B cell (primary cell): ENCODE measurements at regions of chr16 and their contacts with region 1.

Region 1: GRCh38 chr16:117379-118365 is 20.8 kb downstream of the NPRL3 start:
- DNase-seq: peak; percentile 78
- ATAC-seq: peak; percentile 80
- H3K4me3 ChIP-seq: no peak overlapping the region
- H3K4me3 Mint-ChIP-seq: no peak overlapping the region
- H3K27ac ChIP-seq: no peak overlapping the region
- H3K27ac Mint-ChIP-seq: no peak overlapping the region
- H3K4me1 ChIP-seq: peaks cover 0 to 6% of the 10 kb centered on the region in 2 donors
- H3K4me1 Mint-ChIP-seq: peaks cover 4% of the 10 kb centered on the region
- H3K27me3 ChIP-seq: no peaks in the 10 kb centered on the region
- H3K27me3 Mint-ChIP-seq: no peaks in the 10 kb centered on the region
- CTCF ChIP-seq: peak; percentile 82

Region 2: GRCh38 chr16:106623-107324 is 10.9 kb before region 1 on chr16:
- CTCF ChIA-PET with region 1: interaction called, 43 read pairs
- POLR2A ChIA-PET with region 1: no interaction called
- intact Hi-C with region 1: no loop called
- DNase-seq: peak; percentile 78
- ATAC-seq: peak; percentile 74
- H3K4me3 ChIP-seq: no peak overlapping the region
- H3K4me3 Mint-ChIP-seq: no peak overlapping the region
- H3K27ac ChIP-seq: no peak overlapping the region
- H3K27ac Mint-ChIP-seq: no peak overlapping the region
- H3K4me1 ChIP-seq: peaks cover 0 to 3% of the 10 kb centered on the region in 2 donors
- H3K4me1 Mint-ChIP-seq: peaks cover 3% of the 10 kb centered on the region
- H3K27me3 ChIP-seq: no peaks in the 10 kb centered on the region
- H3K27me3 Mint-ChIP-seq: no peaks in the 10 kb centered on the region
- CTCF ChIP-seq: peak; percentile 82

Region 3: GRCh38 chr16:129075-129474 is 11.4 kb after region 1 on chr16:
- CTCF ChIA-PET with region 1: interaction called, 15 read pairs
- POLR2A ChIA-PET with region 1: no interaction called
- intact Hi-C with region 1: no loop called
- DNase-seq: no peak
- ATAC-seq: no peak
- H3K4me3 ChIP-seq: no peak overlapping the region
- H3K4me3 Mint-ChIP-seq: no peak overlapping the region
- H3K27ac ChIP-seq: no peak overlapping the region
- H3K27ac Mint-ChIP-seq: no peak overlapping the region
- H3K4me1 ChIP-seq: no peaks in the 10 kb centered on the region
- H3K4me1 Mint-ChIP-seq: peaks cover 3% of the 10 kb centered on the region
- H3K27me3 ChIP-seq: no peaks in the 10 kb centered on the region
- H3K27me3 Mint-ChIP-seq: no peaks in the 10 kb centered on the region
- CTCF ChIP-seq: no peak

Region 4: DNA sequence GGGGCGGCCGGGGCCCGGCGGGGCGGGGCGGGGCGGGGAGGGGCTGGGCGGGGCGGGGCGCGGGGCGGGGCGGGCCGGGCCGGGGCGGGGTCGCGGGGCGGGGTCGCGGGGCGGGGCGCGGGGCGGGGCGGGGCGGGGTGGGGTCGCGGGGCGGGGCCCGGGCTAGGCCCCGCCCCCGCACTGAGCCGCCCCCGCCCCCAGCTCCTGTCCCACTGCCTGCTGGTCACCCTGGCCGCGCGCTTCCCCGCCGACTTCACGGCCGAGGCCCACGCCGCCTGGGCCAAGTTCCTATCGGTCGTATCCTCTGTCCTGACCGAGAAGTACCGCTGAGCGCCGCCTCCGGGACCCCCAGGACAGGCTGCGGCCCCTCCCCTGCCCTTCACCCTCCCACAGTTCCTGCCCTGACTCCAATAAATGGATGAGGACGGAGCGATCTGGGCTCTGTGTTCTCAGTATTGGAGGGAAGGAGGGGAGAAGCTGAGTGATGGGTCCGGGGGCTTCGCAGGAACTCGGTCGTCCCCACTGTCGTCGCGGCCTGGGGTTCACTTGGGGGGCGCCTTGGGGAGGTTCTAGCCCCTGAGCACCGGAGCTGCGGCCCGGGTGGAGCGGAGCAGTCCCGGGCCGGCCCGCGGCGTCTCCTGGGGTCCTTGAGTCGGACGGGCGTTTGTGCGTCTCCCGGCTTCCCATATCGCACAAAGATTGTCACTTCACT is 47.3 kb after region 1 on chr16:
- CTCF ChIA-PET with region 1: no interaction called
- POLR2A ChIA-PET with region 1: no interaction called
- intact Hi-C with region 1: no loop called
- DNase-seq: peak; percentile 42
- ATAC-seq: peak; percentile 55
- H3K4me3 ChIP-seq: peak overlapping the region in 2 of 5 experiments; percentile 32 to 35
- H3K4me3 Mint-ChIP-seq: peak overlapping the region; percentile 41
- H3K27ac ChIP-seq: no peak overlapping the region
- H3K27ac Mint-ChIP-seq: no peak overlapping the region
- H3K4me1 ChIP-seq: peaks cover 18 to 23% of the 10 kb centered on the region in 2 donors
- H3K4me1 Mint-ChIP-seq: peaks cover 15% of the 10 kb centered on the region
- H3K27me3 ChIP-seq: peaks cover 0 to 56% (median 20%) of the 10 kb centered on the region in 4 experiments
- H3K27me3 Mint-ChIP-seq: peaks cover 42% of the 10 kb centered on the region
- CTCF ChIP-seq: no peak

Region 5: DNA sequence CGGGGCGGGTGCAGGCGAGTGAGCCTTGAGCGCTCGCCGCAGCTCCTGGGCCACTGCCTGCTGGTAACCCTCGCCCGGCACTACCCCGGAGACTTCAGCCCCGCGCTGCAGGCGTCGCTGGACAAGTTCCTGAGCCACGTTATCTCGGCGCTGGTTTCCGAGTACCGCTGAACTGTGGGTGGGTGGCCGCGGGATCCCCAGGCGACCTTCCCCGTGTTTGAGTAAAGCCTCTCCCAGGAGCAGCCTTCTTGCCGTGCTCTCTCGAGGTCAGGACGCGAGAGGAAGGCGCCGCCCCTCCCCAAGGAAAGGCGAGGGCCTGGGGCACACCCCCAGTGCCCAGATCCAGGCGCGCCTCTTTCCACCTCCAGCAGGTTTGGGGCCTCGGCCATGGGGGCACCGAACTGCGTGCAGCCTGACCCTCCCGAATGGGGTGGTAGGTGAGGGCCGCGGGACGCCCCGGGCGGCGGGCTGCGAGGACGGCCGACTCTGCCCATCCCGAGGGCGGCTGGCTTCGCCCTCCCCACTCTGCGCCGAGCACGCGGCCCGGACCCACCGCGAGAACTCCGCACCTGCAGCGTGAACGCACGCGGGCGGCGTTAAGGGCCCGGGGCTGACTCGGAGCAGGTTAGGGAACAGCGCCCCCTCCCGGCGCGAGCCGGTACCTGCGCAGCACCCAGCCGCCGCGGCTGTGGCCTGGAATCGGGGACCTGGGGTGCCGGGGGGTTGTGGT is 63.4 kb after region 1 on chr16:
- CTCF ChIA-PET with region 1: interaction called, 21 read pairs
- POLR2A ChIA-PET with region 1: no interaction called
- intact Hi-C with region 1: no loop called
- DNase-seq: peak; percentile 87
- ATAC-seq: peak; percentile 87
- H3K4me3 ChIP-seq: peak overlapping the region in 4 of 5 experiments; percentile 23 to 46 (median 38)
- H3K4me3 Mint-ChIP-seq: peak overlapping the region; percentile 45
- H3K27ac ChIP-seq: no peak overlapping the region
- H3K27ac Mint-ChIP-seq: no peak overlapping the region
- H3K4me1 ChIP-seq: peaks cover 14 to 22% of the 10 kb centered on the region in 2 donors
- H3K4me1 Mint-ChIP-seq: peaks cover 12% of the 10 kb centered on the region
- H3K27me3 ChIP-seq: peaks cover 0 to 38% (median 22%) of the 10 kb centered on the region in 4 experiments
- H3K27me3 Mint-ChIP-seq: peaks cover 19% of the 10 kb centered on the region
- CTCF ChIP-seq: peak; percentile 96

Region 6: DNA sequence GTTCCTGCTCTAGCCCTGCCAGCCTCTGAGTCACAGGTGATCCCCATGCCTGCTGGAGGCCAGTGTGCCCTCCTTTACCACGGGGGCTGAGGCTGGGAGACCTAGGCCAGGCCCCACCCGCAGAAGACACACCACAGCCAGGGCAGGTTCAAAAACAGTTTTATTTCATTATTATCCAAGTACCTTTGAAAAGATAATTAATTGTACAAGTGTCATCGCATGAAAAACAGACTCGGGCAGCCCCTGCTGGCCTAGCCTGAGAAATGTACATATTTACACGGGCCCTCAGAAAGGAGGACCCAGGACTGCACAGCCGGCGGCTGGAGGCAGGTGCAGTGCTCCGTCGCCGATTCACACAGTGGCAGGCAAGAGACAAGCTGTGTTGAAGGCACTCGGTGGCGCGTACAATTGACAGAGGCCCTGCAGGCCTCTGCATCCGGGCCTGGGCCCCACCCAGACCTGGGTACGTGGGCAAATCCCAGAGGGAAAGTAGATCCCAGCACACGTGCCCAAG is 169.7 kb after region 1 on chr16:
- CTCF ChIA-PET with region 1: no interaction called
- POLR2A ChIA-PET with region 1: no interaction called
- intact Hi-C with region 1: no loop called
- DNase-seq: no peak
- ATAC-seq: no peak
- H3K4me3 ChIP-seq: no peak overlapping the region
- H3K4me3 Mint-ChIP-seq: no peak overlapping the region
- H3K27ac ChIP-seq: no peak overlapping the region
- H3K27ac Mint-ChIP-seq: no peak overlapping the region
- H3K4me1 ChIP-seq: no peaks in the 10 kb centered on the region
- H3K4me1 Mint-ChIP-seq: no peaks in the 10 kb centered on the region
- H3K27me3 ChIP-seq: no peaks in the 10 kb centered on the region
- H3K27me3 Mint-ChIP-seq: no peaks in the 10 kb centered on the region
- CTCF ChIP-seq: no peak

Region 7: DNA sequence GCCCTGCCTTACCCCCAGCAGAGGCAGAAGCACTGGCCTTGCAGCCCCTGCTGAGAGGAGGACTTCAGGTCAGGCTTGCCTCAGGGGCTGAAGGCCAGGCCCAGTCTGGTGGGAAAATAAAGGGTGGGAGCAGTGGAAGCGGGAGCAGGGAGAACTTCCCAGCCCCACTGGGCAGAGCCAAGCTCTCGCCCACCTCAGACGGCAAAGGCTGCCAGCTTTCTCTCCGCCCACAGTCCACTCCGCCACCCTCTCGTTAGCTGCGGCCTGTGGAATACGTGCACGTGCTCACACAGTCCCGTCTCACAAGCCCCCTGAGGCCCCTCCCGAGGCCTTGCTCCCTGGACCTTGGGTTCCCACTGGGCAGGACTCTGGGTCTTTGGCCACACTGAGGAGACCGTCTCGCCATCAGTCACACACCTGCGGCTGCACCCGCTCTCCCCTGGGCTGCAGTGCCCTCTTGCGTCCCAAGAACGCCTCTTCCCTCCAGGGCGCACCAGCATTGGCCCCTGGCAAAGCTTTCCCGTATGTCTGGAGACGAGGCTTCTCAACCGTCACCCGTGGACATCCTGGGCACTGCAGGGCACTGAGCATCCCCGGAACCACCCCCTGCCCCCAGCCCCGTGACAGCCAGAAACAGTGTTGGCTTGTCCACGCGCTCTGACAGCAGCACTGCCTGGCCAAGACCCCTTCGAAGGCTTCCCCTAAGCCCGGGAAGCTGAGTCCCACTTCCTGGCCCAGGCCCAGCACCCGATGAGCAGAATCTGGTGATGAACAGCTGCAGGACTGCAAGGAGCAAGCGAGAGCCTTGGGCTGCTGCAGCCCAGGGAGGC is 244.4 kb after region 1 on chr16:
- CTCF ChIA-PET with region 1: interaction called, 23 read pairs
- POLR2A ChIA-PET with region 1: no interaction called
- intact Hi-C with region 1: loop called (anchors 1 kb)
- DNase-seq: peak; percentile 80
- ATAC-seq: peak; percentile 89
- H3K4me3 ChIP-seq: no peak overlapping the region
- H3K4me3 Mint-ChIP-seq: no peak overlapping the region
- H3K27ac ChIP-seq: no peak overlapping the region
- H3K27ac Mint-ChIP-seq: peak overlapping the region; percentile 13
- H3K4me1 ChIP-seq: peaks cover 0 to 8% of the 10 kb centered on the region in 2 donors
- H3K4me1 Mint-ChIP-seq: peaks cover 4% of the 10 kb centered on the region
- H3K27me3 ChIP-seq: peaks cover 0 to 10% (median 0%) of the 10 kb centered on the region in 4 experiments
- H3K27me3 Mint-ChIP-seq: peaks cover 5% of the 10 kb centered on the region
- CTCF ChIP-seq: peak; percentile 75

Region 8: DNA sequence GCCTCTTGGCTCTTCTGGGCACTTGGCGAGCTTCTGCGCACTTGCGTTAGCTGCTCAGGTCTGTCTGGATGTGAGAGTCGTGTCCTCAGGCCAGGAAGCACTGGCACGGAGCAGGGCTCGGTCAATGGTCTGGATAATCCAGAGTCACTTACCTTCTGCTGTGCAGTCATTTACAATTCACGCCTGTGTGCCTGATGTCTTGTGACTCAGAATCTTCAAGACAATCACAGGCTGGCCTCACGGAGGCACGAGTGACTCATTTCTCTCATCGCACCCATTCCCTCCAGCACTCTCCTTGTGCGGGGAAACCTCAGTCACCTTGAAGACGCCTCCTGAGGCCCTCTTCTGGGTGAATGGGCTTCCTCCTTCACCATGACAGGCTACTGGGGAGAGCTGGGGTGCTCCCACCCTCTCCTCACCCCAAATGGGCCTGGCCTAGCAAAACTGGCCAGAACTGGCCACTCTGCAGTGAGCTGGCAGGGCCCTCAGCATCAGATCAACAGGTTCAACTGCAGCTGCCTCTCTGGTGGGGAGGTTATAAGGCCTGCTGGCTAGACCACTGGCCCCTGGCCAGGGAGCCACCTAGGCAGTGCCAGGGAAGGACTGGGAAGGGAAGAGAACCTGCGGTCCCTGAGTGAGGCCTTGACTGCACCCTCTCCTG is 408.0 kb after region 1 on chr16:
- CTCF ChIA-PET with region 1: no interaction called
- POLR2A ChIA-PET with region 1: no interaction called
- intact Hi-C with region 1: no loop called
- DNase-seq: peak; percentile 41
- ATAC-seq: no peak
- H3K4me3 ChIP-seq: no peak overlapping the region
- H3K4me3 Mint-ChIP-seq: peak overlapping the region; percentile 89
- H3K27ac ChIP-seq: peak overlapping the region in 1 of 2 donors; percentile 33
- H3K27ac Mint-ChIP-seq: peak overlapping the region; percentile 89
- H3K4me1 ChIP-seq: peaks cover 25 to 47% of the 10 kb centered on the region in 2 donors
- H3K4me1 Mint-ChIP-seq: peaks cover 36% of the 10 kb centered on the region
- H3K27me3 ChIP-seq: no peaks in the 10 kb centered on the region
- H3K27me3 Mint-ChIP-seq: no peaks in the 10 kb centered on the region
- CTCF ChIP-seq: no peak

Region 9: DNA sequence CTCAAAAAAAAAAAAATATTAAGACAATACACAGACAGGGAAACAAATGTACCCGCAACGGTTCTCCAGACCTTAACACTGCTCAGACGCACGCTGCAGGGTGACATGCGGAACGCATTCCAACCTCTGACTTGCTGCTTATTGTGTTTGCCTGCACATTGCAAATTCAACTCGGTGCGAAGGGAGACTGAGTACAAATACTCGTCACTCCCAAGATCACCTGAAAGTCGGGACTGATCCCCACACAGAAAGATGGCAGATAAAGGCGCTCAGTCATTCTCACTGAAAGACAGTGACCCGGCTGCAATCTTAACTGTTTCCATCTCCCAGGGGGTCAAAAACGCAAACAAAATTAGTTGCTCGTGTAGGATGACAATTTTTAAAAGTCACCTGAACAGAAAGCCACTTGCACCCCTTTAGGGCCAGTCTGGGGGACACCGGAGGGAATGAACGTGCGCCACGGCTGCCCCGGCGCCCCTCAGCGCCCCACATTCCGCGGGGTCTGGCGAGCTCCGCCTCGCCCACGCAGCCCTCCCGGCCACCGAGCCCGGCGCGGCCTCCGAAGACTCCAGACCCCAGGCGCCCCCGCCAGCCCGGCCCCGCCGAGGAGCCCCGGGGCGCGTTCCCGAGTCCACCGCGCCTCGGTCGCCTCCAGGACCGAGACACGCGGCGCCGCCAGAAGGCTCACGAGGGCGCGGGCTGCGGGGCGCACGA is 1356.6 kb after region 1 on chr16:
- CTCF ChIA-PET with region 1: no interaction called
- POLR2A ChIA-PET with region 1: no interaction called
- intact Hi-C with region 1: no loop called
- DNase-seq: peak; percentile 46
- ATAC-seq: peak; percentile 5
- H3K4me3 ChIP-seq: peak overlapping the region; percentile 57 to 80 (median 70)
- H3K4me3 Mint-ChIP-seq: peak overlapping the region; percentile 87
- H3K27ac ChIP-seq: peak overlapping the region; percentile 29 to 96
- H3K27ac Mint-ChIP-seq: peak overlapping the region; percentile 74
- H3K4me1 ChIP-seq: peaks cover 45 to 62% of the 10 kb centered on the region in 2 donors
- H3K4me1 Mint-ChIP-seq: peaks cover 56% of the 10 kb centered on the region
- H3K27me3 ChIP-seq: no peaks in the 10 kb centered on the region
- H3K27me3 Mint-ChIP-seq: no peaks in the 10 kb centered on the region
- CTCF ChIP-seq: no peak